IMR-90 (cell line): ENCODE measurements at regions of chr1 and their contacts with region 1.

Region 1: DNA sequence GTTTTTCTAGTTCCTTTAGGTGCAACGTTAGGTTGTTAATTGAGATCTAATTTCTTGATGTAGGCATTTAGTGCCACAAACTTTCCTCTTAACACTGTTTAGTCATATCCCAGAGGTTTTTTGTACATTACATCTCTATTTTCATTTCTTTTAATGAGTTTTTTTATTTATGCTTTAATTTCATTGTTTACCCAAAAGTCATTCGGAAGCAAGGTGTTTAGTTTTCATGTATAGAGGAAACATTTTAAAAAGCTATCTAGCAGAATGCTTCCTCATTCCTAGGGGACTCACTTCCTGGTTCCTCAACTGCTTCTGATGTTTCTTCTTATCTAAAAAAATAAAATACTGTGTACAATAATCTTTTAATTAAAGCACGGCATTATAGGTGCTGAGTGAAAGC is 307.2 kb upstream of the CAMK1G start:
- DNase-seq: no peak
- ATAC-seq: no peak
- H3K4me3 ChIP-seq: no peak overlapping the region
- H3K27ac ChIP-seq: no peak overlapping the region
- H3K4me1 ChIP-seq: no peaks in the 10 kb centered on the region
- H3K27me3 ChIP-seq: no peaks in the 10 kb centered on the region
- CTCF ChIP-seq: no peak
- POLR2A ChIP-seq: no peak
- RAD21 ChIP-seq: no peak

Region 2: DNA sequence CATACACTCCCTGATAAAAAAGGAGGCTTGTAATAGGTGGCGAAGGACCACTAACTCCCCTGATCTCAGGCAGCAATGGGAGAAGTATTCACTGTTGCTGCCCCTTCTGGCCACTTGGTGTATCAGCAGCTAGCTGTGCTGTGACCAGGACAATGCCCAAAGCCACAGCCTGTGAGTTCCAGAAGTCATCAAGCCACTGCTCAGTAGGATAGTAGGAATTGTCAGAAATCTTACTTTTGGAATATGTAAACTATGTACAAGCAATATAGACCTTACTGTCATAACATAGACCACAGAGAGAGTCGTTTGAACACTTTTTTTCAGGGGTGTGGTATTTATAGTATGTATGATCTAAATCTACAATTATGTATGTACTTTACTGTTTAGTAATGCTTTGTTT is 58.9 kb after region 1 on chr1:
- CTCF ChIA-PET with region 1: interaction called, 3 read pairs
- POLR2A ChIA-PET with region 1: no interaction called
- dilution Hi-C with region 1: no loop called
- in situ Hi-C with region 1: no loop called
- intact Hi-C with region 1: loop called (anchors 10 kb)
- DNase-seq: peak; percentile 20
- ATAC-seq: peak; percentile 92
- H3K4me3 ChIP-seq: no peak overlapping the region
- H3K27ac ChIP-seq: no peak overlapping the region
- H3K4me1 ChIP-seq: no peaks in the 10 kb centered on the region
- H3K27me3 ChIP-seq: peaks cover 2% of the 10 kb centered on the region
- CTCF ChIP-seq: peak; percentile 60
- POLR2A ChIP-seq: no peak
- RAD21 ChIP-seq: peak; percentile 41

Region 3: GRCh38 chr1:209769171-209769904 is 493.0 kb after region 1 on chr1:
- CTCF ChIA-PET with region 1: no interaction called
- POLR2A ChIA-PET with region 1: no interaction called
- dilution Hi-C with region 1: no loop called
- in situ Hi-C with region 1: no loop called
- intact Hi-C with region 1: no loop called
- DNase-seq: peak; percentile 87
- ATAC-seq: peak; percentile 85
- H3K4me3 ChIP-seq: no peak overlapping the region
- H3K27ac ChIP-seq: peak overlapping the region; percentile 88
- H3K4me1 ChIP-seq: peaks cover 11% of the 10 kb centered on the region
- H3K27me3 ChIP-seq: no peaks in the 10 kb centered on the region
- CTCF ChIP-seq: no peak
- POLR2A ChIP-seq: no peak
- RAD21 ChIP-seq: no peak